ENCODE measurements at regions of chr1 and their contacts with region 1.

Region 1: DNA sequence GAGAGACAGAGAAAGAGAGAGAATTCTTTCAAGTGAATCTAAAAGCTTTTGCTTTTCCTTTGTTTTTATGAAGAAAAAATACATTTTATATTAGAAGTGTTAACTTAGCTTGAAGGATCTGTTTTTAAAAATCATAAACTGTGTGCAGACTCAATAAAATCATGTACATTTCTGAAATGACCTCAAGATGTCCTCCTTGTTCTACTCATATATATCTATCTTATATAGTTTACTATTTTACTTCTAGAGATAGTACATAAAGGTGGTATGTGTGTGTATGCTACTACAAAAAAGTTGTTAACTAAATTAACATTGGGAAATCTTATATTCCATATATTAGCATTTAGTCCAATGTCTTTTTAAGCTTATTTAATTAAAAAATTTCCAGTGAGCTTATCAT is 117.6 kb downstream of the PTPRC start:
- DNase-seq: no peak
- ATAC-seq: no peak
- H3K4me3 ChIP-seq: no peak overlapping the region
- H3K27ac ChIP-seq: no peak overlapping the region
- H3K4me1 ChIP-seq: no peaks in the 10 kb centered on the region
- H3K27me3 ChIP-seq: no peaks in the 10 kb centered on the region
- CTCF ChIP-seq: peak in 11 of 12 donors; percentile 15 to 63 (median 47)
- POLR2A ChIP-seq: no peak

Region 2: DNA sequence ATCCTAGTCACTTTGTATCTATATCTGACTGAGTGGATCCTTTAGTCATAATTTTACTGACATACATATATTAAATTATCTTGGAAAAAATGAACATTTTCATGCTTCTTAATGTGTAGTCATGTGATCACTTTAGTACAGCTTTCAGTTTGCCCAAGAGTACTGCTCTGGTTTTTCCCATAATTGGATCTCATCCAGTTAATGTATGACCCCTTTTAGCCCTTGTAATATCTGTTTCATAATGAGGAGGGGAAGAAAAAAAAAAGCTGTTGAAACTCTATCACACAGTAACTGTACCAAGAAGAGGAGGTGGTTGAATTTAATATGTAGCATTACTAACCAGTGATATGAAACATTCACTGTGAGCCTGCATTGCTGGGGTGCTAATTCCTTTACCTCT is 211.1 kb after region 1 on chr1:
- intact Hi-C with region 1: no loop called
- DNase-seq: no peak
- ATAC-seq: no peak
- H3K4me3 ChIP-seq: no peak overlapping the region
- H3K27ac ChIP-seq: no peak overlapping the region
- H3K4me1 ChIP-seq: no peaks in the 10 kb centered on the region
- H3K27me3 ChIP-seq: no peaks in the 10 kb centered on the region
- CTCF ChIP-seq: no peak
- POLR2A ChIP-seq: no peak

Region 3: DNA sequence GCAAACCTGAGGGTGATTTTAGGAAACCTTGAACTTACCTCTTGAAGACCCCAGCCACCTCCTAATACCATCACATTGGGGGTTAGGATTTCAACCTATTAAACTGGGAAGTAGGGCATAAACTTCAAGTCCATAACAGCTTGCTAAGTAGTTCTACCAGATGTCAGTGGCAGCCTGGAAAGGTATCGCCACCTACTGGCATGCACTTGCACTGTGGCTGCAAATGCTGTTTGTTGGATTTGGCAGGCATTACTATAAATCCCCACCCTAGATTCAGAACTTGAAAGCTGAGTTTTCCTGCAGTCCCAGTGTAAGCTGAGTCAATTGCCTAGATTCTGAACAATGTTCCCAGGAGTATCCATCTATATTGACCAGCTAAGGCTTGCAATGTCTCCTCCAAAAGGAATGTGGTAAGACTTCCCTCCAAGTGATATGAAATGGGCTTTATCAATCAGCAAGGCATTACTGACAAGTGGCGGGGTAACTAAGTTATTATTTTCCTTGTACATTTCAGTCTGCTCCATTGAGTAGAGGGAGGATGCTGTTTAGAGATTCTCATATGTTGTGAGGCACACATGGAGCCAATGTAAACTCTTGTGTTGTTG is 356.9 kb after region 1 on chr1:
- intact Hi-C with region 1: loop called in 5 of 10 experiments (anchors 5 to 10 kb)
- DNase-seq: peak in 4 of 5 donors; percentile 21 to 75 (median 30)
- ATAC-seq: no peak
- H3K4me3 ChIP-seq: no peak overlapping the region
- H3K27ac ChIP-seq: no peak overlapping the region
- H3K4me1 ChIP-seq: no peaks in the 10 kb centered on the region
- H3K27me3 ChIP-seq: no peaks in the 10 kb centered on the region
- CTCF ChIP-seq: peak; percentile 55 to 80 (median 60)
- POLR2A ChIP-seq: no peak

Region 4: GRCh38 chr1:199243423-199244061 is 487.1 kb after region 1 on chr1:
- intact Hi-C with region 1: loop called in 4 of 10 experiments (anchors 2 to 10 kb)
- DNase-seq: peak; percentile 21 to 70 (median 47)
- ATAC-seq: peak in 3 of 4 donors; percentile 77 to 87 (median 83)
- H3K4me3 ChIP-seq: no peak overlapping the region
- H3K27ac ChIP-seq: no peak overlapping the region
- H3K4me1 ChIP-seq: no peaks in the 10 kb centered on the region
- H3K27me3 ChIP-seq: no peaks in the 10 kb centered on the region
- CTCF ChIP-seq: peak; percentile 42 to 65 (median 57)
- POLR2A ChIP-seq: no peak

Region 5: GRCh38 chr1:199545780-199546179 is 789.3 kb after region 1 on chr1:
- intact Hi-C with region 1: loop called in 6 of 10 experiments (anchors 5 to 10 kb)
- DNase-seq: no peak
- ATAC-seq: no peak
- H3K4me3 ChIP-seq: no peak overlapping the region
- H3K27ac ChIP-seq: no peak overlapping the region
- H3K4me1 ChIP-seq: no peaks in the 10 kb centered on the region
- H3K27me3 ChIP-seq: no peaks in the 10 kb centered on the region
- CTCF ChIP-seq: no peak
- POLR2A ChIP-seq: no peak

Region 6: GRCh38 chr1:199551967-199552565 is 795.6 kb after region 1 on chr1:
- intact Hi-C with region 1: loop called in 7 of 10 experiments (anchors 2 to 10 kb)
- DNase-seq: peak in 2 of 5 donors; percentile 9 to 23
- ATAC-seq: no peak
- H3K4me3 ChIP-seq: no peak overlapping the region
- H3K27ac ChIP-seq: no peak overlapping the region
- H3K4me1 ChIP-seq: no peaks in the 10 kb centered on the region
- H3K27me3 ChIP-seq: no peaks in the 10 kb centered on the region
- CTCF ChIP-seq: peak; percentile 23 to 71 (median 58)
- POLR2A ChIP-seq: no peak